ENCODE measurements at regions of chr3 and their contacts with region 1.

Region 1: DNA sequence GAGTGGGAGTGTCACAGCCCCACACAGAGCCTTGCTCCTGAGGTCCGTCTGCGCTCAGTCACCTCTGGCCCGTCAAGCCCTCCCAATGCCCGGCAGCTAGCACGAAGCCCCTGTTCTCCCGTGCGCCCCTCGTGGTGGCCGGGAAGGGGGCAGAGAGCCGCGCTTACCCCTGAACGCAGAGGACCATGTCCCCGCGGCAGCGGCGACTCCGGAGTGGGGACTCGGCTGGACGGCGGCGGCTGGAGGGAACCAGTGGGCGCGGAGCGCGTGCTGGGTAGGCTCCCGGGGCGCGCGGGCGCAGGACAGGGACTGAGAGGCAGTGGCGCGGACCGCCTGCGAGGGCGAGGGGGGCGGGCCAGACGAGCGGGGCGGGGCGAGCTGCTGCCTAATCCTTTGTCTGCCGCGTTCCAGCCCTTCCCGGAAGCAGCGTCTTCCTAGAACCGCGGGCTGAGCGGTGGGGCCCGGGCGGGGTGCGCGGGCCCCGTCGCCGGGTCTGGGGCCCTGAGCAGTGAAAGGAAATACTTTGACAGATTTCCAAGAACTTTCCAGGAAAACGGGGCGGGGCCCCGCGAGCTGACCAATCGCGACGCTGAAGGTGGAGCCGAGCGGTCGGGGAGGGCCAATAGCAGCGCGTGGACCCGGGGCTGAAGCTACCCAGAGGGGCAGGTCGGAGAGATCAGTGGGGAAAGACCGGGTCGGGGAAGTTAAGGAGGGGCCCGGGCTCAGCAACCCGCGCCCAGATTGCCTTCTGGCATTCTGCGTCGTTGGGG is at the start of gene CISH:
- DNase-seq: peak; percentile 90 to 92 (median 92)
- H3K4me3 ChIP-seq: peak within 1 kb of the TSS; percentile 98
- H3K4me3 Mint-ChIP-seq: peak within 1 kb of the TSS; percentile 82 to 97 (median 97)
- H3K27ac ChIP-seq: peak within 1 kb of the TSS; percentile 84
- H3K27ac Mint-ChIP-seq: peak within 1 kb of the TSS; percentile 91 to 99 (median 95)
- H3K4me1 ChIP-seq: peaks cover 61% of the 10 kb centered on the region
- H3K4me1 Mint-ChIP-seq: peaks cover 69 to 81% (median 73%) of the 10 kb centered on the region in 3 donors
- H3K27me3 ChIP-seq: no peaks in the 10 kb centered on the region
- H3K27me3 Mint-ChIP-seq: no peaks in the 10 kb centered on the region
- total RNA-seq, gene CISH: 216 to 222 TPM

Region 2: GRCh38 chr3:50350527-50351322 is 260.9 kb before region 1 on chr3 and contains the starts of genes CYB561D2 and NPRL2:
- CTCF ChIA-PET with region 1: interaction called, 10 read pairs
- POLR2A ChIA-PET with region 1: interaction called, 3 read pairs
- DNase-seq: peak; percentile 98 to 100 (median 99)
- H3K4me3 ChIP-seq: peak within 1 kb of the TSS; percentile 100
- H3K4me3 Mint-ChIP-seq: peak within 1 kb of the TSS; percentile 96 to 99 (median 98)
- H3K27ac ChIP-seq: peak within 1 kb of the TSS; percentile 95
- H3K27ac Mint-ChIP-seq: peak within 1 kb of the TSS; percentile 97 to 99 (median 98)
- H3K4me1 ChIP-seq: peaks cover 55% of the 10 kb centered on the region
- H3K4me1 Mint-ChIP-seq: peaks cover 48 to 82% (median 52%) of the 10 kb centered on the region in 3 donors
- H3K27me3 ChIP-seq: no peaks in the 10 kb centered on the region
- H3K27me3 Mint-ChIP-seq: no peaks in the 10 kb centered on the region
- total RNA-seq, gene CYB561D2: 32.4 to 37.7 TPM
- total RNA-seq, gene NPRL2: 44.6 to 48.0 TPM

Region 3: GRCh38 chr3:50587806-50588758 is 23.6 kb before region 1 on chr3:
- CTCF ChIA-PET with region 1: interaction called, 724 read pairs
- POLR2A ChIA-PET with region 1: interaction called, 56 read pairs
- DNase-seq: peak in 4 of 5 donors; percentile 60 to 81 (median 64)
- H3K4me3 ChIP-seq: peak overlapping the region; percentile 9
- H3K4me3 Mint-ChIP-seq: peak overlapping the region; percentile 62 to 83 (median 72)
- H3K27ac ChIP-seq: peak overlapping the region; percentile 29
- H3K27ac Mint-ChIP-seq: peak overlapping the region; percentile 88 to 99 (median 94)
- H3K4me1 ChIP-seq: peaks cover 67% of the 10 kb centered on the region
- H3K4me1 Mint-ChIP-seq: peaks cover 54 to 72% (median 66%) of the 10 kb centered on the region in 3 donors
- H3K27me3 ChIP-seq: no peaks in the 10 kb centered on the region
- H3K27me3 Mint-ChIP-seq: no peaks in the 10 kb centered on the region

Region 4: GRCh38 chr3:50623840-50624474 is 12.3 kb after region 1 on chr3:
- CTCF ChIA-PET with region 1: interaction called, 10 read pairs
- POLR2A ChIA-PET with region 1: no interaction called
- DNase-seq: peak in 2 of 5 donors; percentile 37 to 52
- H3K4me3 ChIP-seq: peak overlapping the region; percentile 22
- H3K4me3 Mint-ChIP-seq: peak overlapping the region; percentile 61 to 85 (median 76)
- H3K27ac ChIP-seq: no peak overlapping the region
- H3K27ac Mint-ChIP-seq: peak overlapping the region; percentile 81 to 96 (median 91)
- H3K4me1 ChIP-seq: peaks cover 88% of the 10 kb centered on the region
- H3K4me1 Mint-ChIP-seq: peaks cover 72 to 95% (median 82%) of the 10 kb centered on the region in 3 donors
- H3K27me3 ChIP-seq: no peaks in the 10 kb centered on the region
- H3K27me3 Mint-ChIP-seq: no peaks in the 10 kb centered on the region

Region 5: GRCh38 chr3:50652709-50653108 is 41.1 kb after region 1 on chr3:
- CTCF ChIA-PET with region 1: interaction called, 277 read pairs
- POLR2A ChIA-PET with region 1: interaction called, 15 read pairs
- DNase-seq: peak in 4 of 5 donors; percentile 32 to 71 (median 42)
- H3K4me3 ChIP-seq: no peak overlapping the region
- H3K4me3 Mint-ChIP-seq: no peak overlapping the region
- H3K27ac ChIP-seq: no peak overlapping the region
- H3K27ac Mint-ChIP-seq: peak overlapping the region in 2 of 8 donors; percentile 47 to 49
- H3K4me1 ChIP-seq: peaks cover 3% of the 10 kb centered on the region
- H3K4me1 Mint-ChIP-seq: peaks cover 0 to 3% (median 0%) of the 10 kb centered on the region in 3 donors
- H3K27me3 ChIP-seq: no peaks in the 10 kb centered on the region
- H3K27me3 Mint-ChIP-seq: no peaks in the 10 kb centered on the region

Region 6: DNA sequence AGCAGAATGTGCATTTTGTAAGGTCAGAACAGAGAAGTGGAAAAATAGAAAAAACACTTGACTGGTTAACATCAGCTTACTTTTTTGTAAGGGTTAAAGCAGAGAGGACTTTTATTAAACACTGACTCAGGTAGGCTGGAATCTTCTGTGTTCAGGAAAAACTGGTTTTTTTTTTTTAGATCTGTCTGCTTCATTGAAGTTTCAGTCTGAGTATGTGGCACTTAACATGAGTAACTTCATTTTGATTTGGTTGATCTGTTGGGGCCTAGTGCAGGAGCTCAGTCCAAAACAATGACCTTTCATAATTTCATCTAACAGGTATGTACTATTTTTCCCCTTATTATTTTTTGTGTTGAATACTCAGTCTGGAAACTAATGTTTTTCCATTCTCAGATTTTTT is 204.2 kb after region 1 on chr3:
- CTCF ChIA-PET with region 1: no interaction called
- POLR2A ChIA-PET with region 1: no interaction called
- DNase-seq: no peak
- H3K4me3 ChIP-seq: no peak overlapping the region
- H3K4me3 Mint-ChIP-seq: no peak overlapping the region
- H3K27ac ChIP-seq: no peak overlapping the region
- H3K27ac Mint-ChIP-seq: no peak overlapping the region
- H3K4me1 ChIP-seq: no peaks in the 10 kb centered on the region
- H3K4me1 Mint-ChIP-seq: no peaks in the 10 kb centered on the region
- H3K27me3 ChIP-seq: no peaks in the 10 kb centered on the region
- H3K27me3 Mint-ChIP-seq: no peaks in the 10 kb centered on the region

Region 7: GRCh38 chr3:51371943-51372557 is 760.4 kb after region 1 on chr3:
- CTCF ChIA-PET with region 1: interaction called, 29 read pairs
- POLR2A ChIA-PET with region 1: no interaction called
- DNase-seq: peak in 4 of 5 donors; percentile 13 to 57 (median 37)
- H3K4me3 ChIP-seq: no peak overlapping the region
- H3K4me3 Mint-ChIP-seq: no peak overlapping the region
- H3K27ac ChIP-seq: no peak overlapping the region
- H3K27ac Mint-ChIP-seq: no peak overlapping the region
- H3K4me1 ChIP-seq: peaks cover 3% of the 10 kb centered on the region
- H3K4me1 Mint-ChIP-seq: peaks cover 0 to 4% (median 2%) of the 10 kb centered on the region in 3 donors
- H3K27me3 ChIP-seq: no peaks in the 10 kb centered on the region
- H3K27me3 Mint-ChIP-seq: peaks cover 8 to 23% of the 10 kb centered on the region in 2 donors

Region 8: GRCh38 chr3:51434746-51435327 is 823.2 kb after region 1 on chr3:
- CTCF ChIA-PET with region 1: interaction called, 10 read pairs
- POLR2A ChIA-PET with region 1: no interaction called
- DNase-seq: peak in 4 of 5 donors; percentile 10 to 57 (median 38)
- H3K4me3 ChIP-seq: no peak overlapping the region
- H3K4me3 Mint-ChIP-seq: no peak overlapping the region
- H3K27ac ChIP-seq: no peak overlapping the region
- H3K27ac Mint-ChIP-seq: peak overlapping the region in 4 of 8 donors; percentile 7 to 54 (median 24)
- H3K4me1 ChIP-seq: no peaks in the 10 kb centered on the region
- H3K4me1 Mint-ChIP-seq: peaks cover 8 to 10% (median 9%) of the 10 kb centered on the region in 3 donors
- H3K27me3 ChIP-seq: no peaks in the 10 kb centered on the region
- H3K27me3 Mint-ChIP-seq: no peaks in the 10 kb centered on the region